Left colon (tissue), 2 donors: ENCODE measurements at regions of chr7 and their contacts with region 1.

Region 1: DNA sequence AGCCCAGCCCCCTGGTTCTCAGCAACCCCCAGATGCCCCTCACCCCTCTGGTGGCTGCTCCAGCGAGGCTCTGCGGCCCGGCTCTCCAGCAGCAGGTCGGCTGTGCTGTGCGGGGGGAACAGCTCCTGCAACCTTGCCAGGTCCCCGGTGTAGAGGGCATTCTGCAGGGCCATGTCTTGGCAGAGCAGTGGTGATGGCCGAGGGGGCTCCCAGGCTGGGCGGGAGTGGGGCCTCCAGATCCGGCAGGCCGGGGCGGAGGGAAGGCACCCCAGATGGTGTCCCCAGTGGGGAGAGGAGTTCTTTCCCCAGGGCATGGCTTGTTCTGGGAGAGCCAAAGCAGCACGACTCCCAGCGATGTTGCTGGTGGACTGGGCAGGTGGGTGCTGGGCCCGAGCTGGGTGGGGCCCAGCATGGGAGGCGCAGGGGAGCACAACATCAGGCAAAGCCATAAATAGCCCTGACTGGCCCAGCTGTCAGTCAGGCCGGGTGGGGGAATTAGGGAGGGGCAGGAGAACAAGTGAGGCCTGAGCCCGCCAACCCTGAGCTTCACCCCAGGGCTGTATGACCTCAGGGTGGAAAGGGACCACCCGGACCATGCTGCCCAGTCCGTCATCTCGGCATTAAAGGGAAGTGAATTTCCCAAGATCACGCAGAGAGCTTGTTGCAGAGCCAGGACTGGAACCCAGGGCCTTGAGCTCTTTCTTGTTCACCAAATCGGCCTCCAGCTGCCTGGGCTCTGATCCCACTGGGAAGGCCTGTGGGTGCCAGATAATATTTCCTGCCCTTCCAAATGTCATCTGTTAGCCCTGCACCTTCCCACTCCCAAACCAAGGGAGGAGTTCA is 580 bp upstream of the ASB10 start:
- DNase-seq: no peak
- ATAC-seq: no peak

Region 2: DNA sequence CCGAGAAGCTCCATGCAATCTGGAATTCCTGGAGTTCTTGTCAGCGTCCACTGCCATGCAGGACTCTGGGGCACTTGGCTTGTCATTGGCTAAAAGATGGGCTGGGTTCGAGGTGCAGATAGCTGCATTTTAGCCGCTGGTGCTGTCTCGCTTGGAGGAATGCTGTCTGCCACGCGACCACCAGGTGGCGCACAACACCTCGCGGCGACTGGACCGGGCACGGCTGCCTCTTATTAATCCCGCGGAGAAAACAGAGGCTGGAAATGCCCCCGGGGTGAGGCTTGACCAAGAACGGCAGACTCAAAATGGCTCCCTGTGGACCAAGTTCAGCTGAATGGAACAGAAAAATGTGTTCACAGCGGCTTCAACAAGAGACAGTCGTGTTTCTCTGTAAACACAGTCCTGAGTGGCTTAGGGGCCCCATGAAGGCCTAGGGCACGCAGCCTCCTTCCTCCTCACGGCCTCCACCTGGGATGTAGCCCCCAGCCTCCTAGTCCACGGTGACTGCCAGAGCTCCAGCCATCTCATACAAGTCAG is 289.1 kb before region 1 on chr7:
- intact Hi-C with region 1: no loop called
- DNase-seq: peak; percentile 67 to 88
- ATAC-seq: peak; percentile 18

Region 3: GRCh38 chr7:151152643-151153513 is 34.8 kb before region 1 on chr7:
- intact Hi-C with region 1: loop called in 1 of 2 experiments (anchors 2 kb)
- DNase-seq: no peak
- ATAC-seq: no peak

Region 4: GRCh38 chr7:151245360-151246101 is 57.9 kb after region 1 on chr7:
- intact Hi-C with region 1: no loop called
- DNase-seq: peak in 1 of 2 donors; percentile 57
- ATAC-seq: peak; percentile 23